ENCODE measurements at regions of chr3 and their contacts with region 1.

Region 1: GRCh38 chr3:42229942-42230688 is 35.9 kb downstream of the CCK start:
- DNase-seq: no peak
- H3K4me3 ChIP-seq: peak overlapping the region; percentile 23; the same call in 1 of the 2 replicates
- CTCF ChIP-seq: peak; percentile 44

Region 2: DNA sequence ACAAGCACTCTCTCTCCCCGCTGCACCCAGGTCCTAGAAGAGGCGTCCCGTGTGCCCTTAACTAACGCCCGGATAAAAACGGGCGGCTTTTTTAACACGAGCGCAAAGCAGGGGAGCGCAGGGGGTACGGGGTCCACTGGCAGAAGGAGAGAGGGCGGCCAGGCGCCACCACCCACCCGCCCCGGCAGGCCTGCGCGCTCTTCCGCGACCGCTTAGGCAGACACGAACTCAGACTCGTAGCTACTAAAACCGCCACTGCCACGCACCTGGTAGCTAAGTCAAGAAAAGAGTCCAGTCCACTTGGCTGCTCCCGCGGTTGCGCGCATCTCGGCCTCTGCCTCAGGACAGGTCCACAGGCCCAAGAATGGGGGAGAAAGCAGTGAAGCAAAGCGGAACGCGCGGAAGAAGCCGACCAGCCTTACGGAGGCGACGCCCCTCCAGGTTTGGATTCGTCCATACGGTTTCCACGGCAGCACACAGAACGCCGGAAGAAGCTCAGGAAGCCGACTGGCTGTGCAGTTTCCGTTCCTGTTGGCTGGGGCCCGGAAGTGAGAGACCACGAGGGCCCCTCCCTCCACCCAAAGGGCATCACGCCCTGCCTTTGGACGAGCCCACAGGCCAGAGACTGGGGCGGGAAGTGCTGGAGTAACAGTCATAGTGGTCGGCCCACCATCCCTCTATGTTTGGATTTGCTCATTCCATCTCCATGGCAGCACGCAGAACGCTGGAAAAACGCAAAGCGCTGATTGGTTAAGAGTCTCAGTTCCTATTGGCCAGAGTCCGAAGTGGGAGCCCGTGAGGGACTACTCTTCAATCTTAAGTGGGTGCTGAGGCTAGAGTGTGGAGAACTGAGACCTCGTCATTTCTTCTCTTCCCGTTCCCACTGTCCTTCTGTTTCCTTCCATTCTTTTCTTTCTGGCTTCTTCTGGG is 268.1 kb before region 1 on chr3 and contains the start of gene ULK4:
- CTCF ChIA-PET with region 1: no interaction called
- POLR2A ChIA-PET with region 1: no interaction called
- DNase-seq: peak; percentile 99
- H3K4me3 ChIP-seq: peak within 1 kb of the TSS; percentile 79
- CTCF ChIP-seq: no peak

Region 3: DNA sequence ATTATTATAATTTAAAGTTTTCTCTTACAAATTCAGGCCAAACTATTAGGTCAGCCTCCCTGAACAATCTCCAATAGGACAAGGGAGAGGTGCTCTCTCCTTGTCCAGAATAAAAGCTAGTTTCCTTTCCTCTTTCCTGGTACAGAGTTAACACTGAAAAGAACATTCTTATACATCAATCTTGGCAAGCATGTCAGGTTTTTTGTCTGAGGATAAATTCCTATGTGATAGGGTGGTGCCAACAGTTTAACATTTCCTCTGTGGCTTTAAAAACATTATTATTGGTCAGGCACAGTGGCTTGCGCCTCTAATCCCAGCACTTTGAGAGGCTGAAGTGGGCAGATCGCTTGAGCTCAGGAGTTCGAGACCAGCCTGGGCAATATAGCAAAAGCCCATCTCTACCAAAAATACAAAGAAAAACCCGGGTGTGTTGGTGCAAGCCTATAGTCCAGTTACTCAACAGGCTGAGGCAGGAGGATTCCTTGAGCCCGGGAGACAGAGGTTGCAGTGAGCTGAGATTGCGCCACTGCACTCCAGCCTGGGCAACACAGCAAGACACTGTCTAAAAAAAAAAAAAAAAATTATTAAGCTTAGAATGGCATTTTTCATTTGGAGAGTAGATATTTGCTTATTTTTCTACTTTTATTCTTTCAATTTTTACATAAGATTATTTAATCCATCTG is 254.6 kb before region 1 on chr3:
- CTCF ChIA-PET with region 1: no interaction called
- POLR2A ChIA-PET with region 1: no interaction called
- DNase-seq: no peak
- H3K4me3 ChIP-seq: no peak overlapping the region
- CTCF ChIP-seq: no peak

Region 4: DNA sequence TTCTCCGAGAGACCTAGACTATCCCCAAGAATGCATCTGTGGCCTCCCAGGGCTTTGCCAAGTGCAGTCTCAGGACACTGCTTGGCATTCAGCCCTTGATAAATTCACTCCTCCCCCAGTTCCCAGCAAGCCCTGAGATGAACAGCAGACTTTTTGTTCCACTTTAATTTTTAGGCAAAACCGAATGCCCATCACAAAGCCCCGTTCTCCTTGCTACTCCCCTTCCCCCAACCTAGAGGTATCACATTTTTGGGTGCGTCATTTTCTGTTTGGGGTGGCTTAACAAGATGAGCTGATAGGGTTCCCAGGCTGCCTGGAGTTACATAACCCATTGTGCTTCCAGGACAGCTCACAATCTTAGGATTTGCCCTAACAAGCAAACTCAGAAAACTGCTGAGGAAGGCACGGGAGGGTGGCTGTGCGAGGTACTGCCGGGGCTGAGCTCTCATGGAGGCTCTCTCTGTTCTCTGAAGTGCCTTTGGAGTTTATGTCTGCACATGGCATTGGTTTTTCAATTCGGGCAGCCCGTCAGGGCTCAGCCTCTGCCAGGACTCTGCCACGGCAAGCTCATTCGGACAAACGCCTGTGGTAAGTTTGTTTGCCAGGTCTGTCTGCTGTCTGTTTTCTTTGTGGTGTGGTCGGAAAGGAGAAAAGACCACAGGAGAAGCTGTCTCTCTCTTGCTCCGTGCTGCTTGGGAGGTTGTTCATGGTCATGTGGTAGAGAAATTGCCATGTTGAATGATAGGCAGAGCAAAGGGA is 139.0 kb before region 1 on chr3 and contains the start of gene TRAK1:
- CTCF ChIA-PET with region 1: no interaction called
- POLR2A ChIA-PET with region 1: no interaction called
- DNase-seq: no peak
- H3K4me3 ChIP-seq: no peak within 1 kb of the TSS
- CTCF ChIP-seq: no peak

Region 5: GRCh38 chr3:42161050-42161935 is 68.8 kb before region 1 on chr3:
- CTCF ChIA-PET with region 1: no interaction called
- POLR2A ChIA-PET with region 1: no interaction called
- DNase-seq: no peak
- H3K4me3 ChIP-seq: no peak overlapping the region
- CTCF ChIP-seq: no peak

Region 6: DNA sequence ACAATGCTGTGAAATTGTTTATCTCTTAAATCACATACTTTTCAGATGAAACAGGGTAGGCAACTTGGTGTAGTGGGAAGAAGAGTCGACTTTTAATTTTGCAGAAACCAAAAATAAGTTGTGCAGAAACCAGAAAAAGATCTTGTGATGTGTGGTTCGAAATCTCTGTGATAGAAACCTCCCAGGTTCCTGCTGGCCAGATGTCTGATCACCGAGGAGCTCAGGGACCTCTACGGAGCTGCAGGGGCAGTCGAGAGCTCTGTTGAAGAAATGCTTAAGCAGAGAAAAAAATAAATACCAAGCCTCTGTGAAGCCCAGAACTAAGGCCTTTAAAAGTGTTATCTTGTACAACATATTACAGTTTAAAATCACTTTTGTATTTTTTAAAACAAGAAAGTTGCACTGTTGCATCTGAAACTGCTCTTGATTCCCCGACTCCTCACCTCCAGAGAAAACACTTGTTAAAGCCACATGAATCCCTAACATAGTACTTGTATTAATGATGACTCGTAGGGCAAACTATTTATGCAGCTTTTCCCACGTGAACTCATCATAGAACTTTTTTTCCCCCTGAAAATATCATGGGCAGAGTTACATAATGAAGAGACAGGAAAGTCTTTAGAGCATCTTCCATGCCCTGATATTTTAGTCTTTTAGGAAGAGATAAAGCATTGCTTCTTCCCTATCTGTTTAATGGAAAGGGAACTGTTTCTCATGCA is 15.4 kb before region 1 on chr3:
- CTCF ChIA-PET with region 1: interaction called, 20 read pairs
- POLR2A ChIA-PET with region 1: no interaction called
- DNase-seq: no peak
- H3K4me3 ChIP-seq: no peak overlapping the region
- CTCF ChIP-seq: no peak

Region 7: GRCh38 chr3:42443819-42444436 is 213.8 kb after region 1 on chr3:
- CTCF ChIA-PET with region 1: interaction called, 98 read pairs
- POLR2A ChIA-PET with region 1: no interaction called
- DNase-seq: peak; percentile 5
- H3K4me3 ChIP-seq: no peak overlapping the region
- CTCF ChIP-seq: peak; percentile 98

Region 8: DNA sequence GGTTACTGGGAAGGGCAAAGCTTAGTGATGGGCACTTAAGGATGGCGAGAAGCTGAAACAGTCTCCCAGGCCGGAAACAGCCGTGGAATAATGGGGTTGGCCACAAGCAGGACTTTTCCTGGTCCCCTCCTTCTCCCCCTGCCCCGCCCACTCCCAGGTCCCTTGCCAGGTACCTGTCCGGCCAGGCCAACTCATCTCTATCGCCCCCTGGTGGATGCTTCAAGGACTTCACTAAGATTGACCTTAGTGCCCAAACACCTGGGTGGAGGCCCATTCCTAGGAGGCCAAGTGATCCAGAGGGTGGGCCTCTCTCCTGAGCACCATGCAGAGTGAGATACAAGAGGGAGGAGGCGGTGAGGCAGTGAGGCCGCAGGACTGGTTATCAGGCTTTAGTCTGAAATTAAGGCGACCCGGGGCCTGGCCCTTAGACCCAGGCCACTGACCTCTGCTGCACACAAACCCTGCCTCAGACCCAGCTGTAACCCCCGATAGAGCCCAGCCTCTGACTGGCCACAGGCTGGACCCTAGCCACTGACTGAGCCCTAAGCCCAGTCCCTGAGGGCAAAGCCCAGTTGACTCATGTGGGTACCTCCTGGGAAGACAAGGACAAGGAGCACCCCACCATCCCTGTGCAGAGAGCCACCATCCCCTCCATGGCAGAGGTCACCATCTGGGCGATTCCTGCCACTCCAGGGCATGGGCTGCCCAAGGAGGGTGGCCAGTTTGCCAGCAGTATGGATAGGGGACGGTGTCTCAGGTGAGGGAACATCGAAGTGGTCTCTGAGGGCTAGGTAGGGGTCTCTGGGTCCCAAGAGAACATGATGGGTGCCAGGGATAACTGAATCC is 310.0 kb after region 1 on chr3:
- CTCF ChIA-PET with region 1: interaction called, 52 read pairs
- POLR2A ChIA-PET with region 1: no interaction called
- DNase-seq: no peak
- H3K4me3 ChIP-seq: no peak overlapping the region
- CTCF ChIP-seq: peak; percentile 66

Region 9: GRCh38 chr3:42552830-42553229 is 322.7 kb after region 1 on chr3:
- CTCF ChIA-PET with region 1: interaction called, 52 read pairs
- POLR2A ChIA-PET with region 1: no interaction called
- DNase-seq: no peak
- H3K4me3 ChIP-seq: no peak overlapping the region
- CTCF ChIP-seq: no peak

Measured in AG04449 (cell line).